ENCODE measurements at regions of chr19 and their contacts with region 1.

Region 1: DNA sequence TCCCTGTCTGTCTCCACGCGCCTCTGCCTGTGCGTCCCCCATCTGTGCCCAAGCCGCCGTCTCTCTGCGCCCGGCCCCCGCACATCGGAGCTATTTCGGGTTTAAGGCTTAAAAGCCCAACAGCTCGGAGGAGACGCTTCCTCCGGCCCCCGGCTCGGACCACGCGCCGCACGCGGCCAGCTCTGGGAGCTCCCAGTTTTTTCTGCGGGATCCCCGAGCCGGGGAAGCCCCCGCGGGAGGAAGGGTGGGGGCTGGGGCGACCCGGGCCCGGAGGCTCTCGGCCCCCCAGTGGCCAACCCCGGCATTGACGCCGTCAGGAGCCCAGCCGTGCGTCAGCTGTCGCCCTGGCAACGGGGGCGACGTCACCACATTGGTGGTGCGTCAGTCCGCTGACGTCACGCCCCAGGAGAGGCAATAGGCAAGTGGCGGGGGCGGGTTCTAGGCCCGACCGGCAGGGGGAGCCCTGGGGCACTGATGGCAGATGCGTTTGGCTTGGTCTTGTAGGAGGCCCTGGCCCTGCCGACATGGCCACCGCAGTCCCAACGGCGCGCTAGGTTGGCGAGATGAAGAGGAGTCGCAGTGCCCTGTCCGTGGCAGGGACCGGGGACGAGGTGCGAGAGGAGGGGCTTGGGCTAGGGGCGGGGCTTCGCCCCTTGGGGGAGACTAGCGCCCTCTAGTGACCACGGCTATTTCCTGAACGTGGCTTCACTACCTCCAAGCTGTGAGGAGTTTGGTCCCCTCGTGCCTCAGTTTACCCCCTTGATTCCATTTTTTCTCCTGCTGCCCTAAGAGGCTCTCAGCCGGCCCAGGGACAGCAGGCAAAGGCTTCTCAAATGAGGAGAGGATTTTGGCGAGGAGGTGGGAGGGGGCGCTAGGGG is 3.7 kb upstream of the PDE4A start:
- DNase-seq: peak; percentile 70 to 99 (median 90)
- ATAC-seq: peak; percentile 69
- H3K4me3 ChIP-seq: peak overlapping the region; percentile 52
- H3K4me3 Mint-ChIP-seq: peak overlapping the region; percentile 76
- H3K27ac ChIP-seq: peak overlapping the region; percentile 31 to 34
- H3K27ac Mint-ChIP-seq: peak overlapping the region; percentile 79
- H3K4me1 ChIP-seq: peaks cover 76% of the 10 kb centered on the region
- H3K4me1 Mint-ChIP-seq: peaks cover 49% of the 10 kb centered on the region
- H3K27me3 ChIP-seq: peaks cover 40 to 44% of the 10 kb centered on the region in 2 experiments
- H3K27me3 Mint-ChIP-seq: peaks cover 42% of the 10 kb centered on the region
- CTCF ChIP-seq: peak; percentile 98

Region 2: DNA sequence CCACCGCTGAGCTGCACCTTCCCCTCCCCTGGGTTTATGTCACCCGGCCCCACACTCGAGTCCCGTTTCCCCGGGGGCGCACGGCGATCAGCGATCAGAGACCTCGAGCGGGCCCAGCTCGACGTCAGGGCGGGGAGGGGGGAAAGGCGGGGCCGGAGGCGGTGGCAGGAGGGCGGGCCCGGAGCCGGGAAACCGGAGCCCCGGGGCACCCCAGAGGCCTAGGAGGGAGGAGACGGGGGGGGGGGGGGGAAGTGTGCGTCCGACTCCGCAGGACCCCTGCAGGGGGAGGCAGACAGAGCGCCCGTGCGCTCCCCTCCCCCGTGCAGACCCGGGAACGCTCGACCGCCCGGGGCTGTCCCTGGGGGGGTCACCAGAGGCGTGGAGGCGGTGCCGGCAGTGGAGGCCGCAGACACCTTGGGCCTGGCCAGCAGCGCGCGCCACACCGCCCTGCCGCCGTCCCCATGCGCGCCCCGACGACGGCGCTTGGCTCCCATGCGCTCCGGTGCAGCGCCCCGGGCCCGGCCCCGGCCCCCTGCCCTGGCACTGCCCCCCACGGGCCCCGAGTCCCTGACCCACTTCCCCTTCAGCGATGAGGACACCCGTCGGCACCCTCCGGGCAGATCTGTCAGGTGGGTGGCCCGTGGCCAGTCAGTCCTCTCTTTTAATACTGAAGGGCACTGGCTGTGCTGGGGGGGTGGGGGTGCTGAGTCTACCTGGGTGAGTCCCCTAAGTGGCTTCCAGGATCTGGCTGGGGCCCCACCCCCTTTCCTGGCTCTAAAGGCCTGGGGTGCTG is 15.5 kb after region 1 on chr19:
- CTCF ChIA-PET with region 1: interaction called, 47 read pairs
- POLR2A ChIA-PET with region 1: interaction called, 5 read pairs
- intact Hi-C with region 1: no loop called
- DNase-seq: peak; percentile 43 to 87 (median 62)
- ATAC-seq: peak; percentile 39
- H3K4me3 ChIP-seq: peak overlapping the region; percentile 53
- H3K4me3 Mint-ChIP-seq: peak overlapping the region; percentile 85
- H3K27ac ChIP-seq: peak overlapping the region in 1 of 2 donors; percentile 79
- H3K27ac Mint-ChIP-seq: peak overlapping the region; percentile 87
- H3K4me1 ChIP-seq: peaks cover 64% of the 10 kb centered on the region
- H3K4me1 Mint-ChIP-seq: peaks cover 49% of the 10 kb centered on the region
- H3K27me3 ChIP-seq: peaks cover 17 to 19% of the 10 kb centered on the region in 2 experiments
- H3K27me3 Mint-ChIP-seq: peaks cover 51% of the 10 kb centered on the region
- CTCF ChIP-seq: no peak